Activated naive CD4-positive, alpha-beta T cell treated with anti-CD3 and anti-CD28 coated beads for 36 hours (primary cell): ENCODE measurements at regions of chr12 and their contacts with region 1.

Region 1: DNA sequence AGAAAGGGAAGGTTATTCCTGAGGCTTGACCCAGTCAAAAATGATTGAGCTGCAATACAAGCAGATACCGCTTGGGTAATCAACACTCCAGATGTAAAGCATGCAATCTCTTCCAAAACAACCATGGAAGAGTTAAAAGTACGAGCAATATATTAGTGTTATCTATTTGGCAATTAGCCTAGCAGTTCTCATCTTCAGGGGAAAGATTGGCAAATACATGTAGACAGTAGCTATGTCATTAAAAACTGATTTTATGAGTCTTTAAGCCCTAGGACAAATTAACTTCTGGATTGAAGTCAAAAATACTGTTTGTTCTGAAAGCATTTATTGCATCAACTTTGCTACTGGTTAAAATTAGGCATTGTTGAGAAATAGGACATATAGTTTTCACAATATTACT is 9.3 kb upstream of the GYS2 start:
- DNase-seq: no peak
- H3K4me3 Mint-ChIP-seq: no peak overlapping the region
- H3K27ac Mint-ChIP-seq: peak overlapping the region; percentile 85
- H3K4me1 Mint-ChIP-seq: peaks cover 49% of the 10 kb centered on the region
- H3K27me3 Mint-ChIP-seq: no peaks in the 10 kb centered on the region

Region 2: GRCh38 chr12:21276826-21277225 is 337.1 kb before region 1 on chr12:
- CTCF ChIA-PET with region 1: no interaction called
- intact Hi-C with region 1: no loop called
- DNase-seq: no peak
- H3K4me3 Mint-ChIP-seq: no peak overlapping the region
- H3K27ac Mint-ChIP-seq: no peak overlapping the region
- H3K4me1 Mint-ChIP-seq: no peaks in the 10 kb centered on the region
- H3K27me3 Mint-ChIP-seq: peaks cover 25% of the 10 kb centered on the region

Region 3: GRCh38 chr12:21599143-21599999 is 14.6 kb before region 1 on chr12:
- CTCF ChIA-PET with region 1: no interaction called
- intact Hi-C with region 1: no loop called
- DNase-seq: no peak
- H3K4me3 Mint-ChIP-seq: no peak overlapping the region
- H3K27ac Mint-ChIP-seq: no peak overlapping the region
- H3K4me1 Mint-ChIP-seq: no peaks in the 10 kb centered on the region
- H3K27me3 Mint-ChIP-seq: no peaks in the 10 kb centered on the region

Region 4: GRCh38 chr12:21642707-21643389 is 28.9 kb after region 1 on chr12:
- CTCF ChIA-PET with region 1: interaction called, 3 read pairs
- intact Hi-C with region 1: loop called (anchors 1 kb)
- DNase-seq: no peak
- H3K4me3 Mint-ChIP-seq: no peak overlapping the region
- H3K27ac Mint-ChIP-seq: peak overlapping the region; percentile 85
- H3K4me1 Mint-ChIP-seq: peaks cover 81% of the 10 kb centered on the region
- H3K27me3 Mint-ChIP-seq: no peaks in the 10 kb centered on the region

Region 5: GRCh38 chr12:21657326-21658077 is 43.6 kb after region 1 on chr12 and contains the start of gene LDHB:
- CTCF ChIA-PET with region 1: no interaction called
- intact Hi-C with region 1: loop called (anchors 1 kb)
- DNase-seq: peak; percentile 98
- H3K4me3 Mint-ChIP-seq: peak within 1 kb of the TSS; percentile 98
- H3K27ac Mint-ChIP-seq: peak within 1 kb of the TSS; percentile 98
- H3K4me1 Mint-ChIP-seq: peaks cover 59% of the 10 kb centered on the region
- H3K27me3 Mint-ChIP-seq: no peaks in the 10 kb centered on the region
- total RNA-seq, gene LDHB: 2,296 to 2,461 TPM

Region 6: GRCh38 chr12:22046090-22046967 is 432.4 kb after region 1 on chr12 and contains the start of gene CMAS:
- CTCF ChIA-PET with region 1: no interaction called
- intact Hi-C with region 1: loop called (anchors 2 kb)
- DNase-seq: peak; percentile 84
- H3K4me3 Mint-ChIP-seq: peak within 1 kb of the TSS; percentile 95
- H3K27ac Mint-ChIP-seq: peak within 1 kb of the TSS; percentile 84
- H3K4me1 Mint-ChIP-seq: peaks cover 39% of the 10 kb centered on the region
- H3K27me3 Mint-ChIP-seq: no peaks in the 10 kb centered on the region
- total RNA-seq, gene CMAS: 47.3 to 48.5 TPM